Right ventricle myocardium inferior (tissue), 1 donor: ENCODE measurements at regions of chr14 and their contacts with region 1.

Region 1: GRCh38 chr14:20332788-20333493 is at the start of gene CCNB1IP1:
- DNase-seq: no peak
- ATAC-seq: peak; percentile 98
- total RNA-seq, gene CCNB1IP1: 41.0 TPM

Region 2: DNA sequence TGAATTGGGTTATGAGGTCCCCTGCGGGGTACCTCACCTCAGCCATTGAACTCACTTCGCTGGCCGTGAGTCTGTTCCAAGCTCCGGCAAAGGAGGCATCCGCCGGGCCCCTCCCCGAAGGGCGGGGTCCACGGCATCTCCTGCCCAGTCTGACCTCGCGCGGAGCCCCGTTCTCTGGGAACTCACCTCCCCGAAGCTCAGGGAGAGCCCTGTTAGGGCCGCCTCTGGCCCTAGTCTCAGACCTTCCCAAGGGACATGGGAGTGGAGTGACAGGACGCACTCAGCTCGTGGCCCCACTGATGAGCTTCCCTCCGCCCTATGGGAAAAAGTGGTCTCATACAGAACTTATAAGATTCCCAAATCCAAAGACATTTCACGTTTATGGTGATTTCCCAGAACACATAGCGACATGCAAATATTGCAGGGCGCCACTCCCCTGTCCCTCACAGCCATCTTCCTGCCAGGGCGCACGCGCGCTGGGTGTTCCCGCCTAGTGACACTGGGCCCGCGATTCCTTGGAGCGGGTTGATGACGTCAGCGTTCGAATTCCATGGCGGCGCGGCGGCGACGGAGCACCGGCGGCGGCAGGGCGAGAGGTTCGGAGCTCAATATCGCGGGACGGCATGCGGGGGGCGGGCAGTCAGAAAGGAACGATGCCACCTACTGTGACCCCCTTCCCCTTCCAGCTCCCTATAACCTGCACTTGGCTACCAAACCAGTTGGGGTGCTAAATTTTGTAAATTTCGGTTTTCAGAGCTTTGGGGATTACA is 10.3 kb after region 1 on chr14 and contains the start of gene PARP2:
- intact Hi-C with region 1: loop called (anchors 1 kb)
- DNase-seq: peak; percentile 98
- ATAC-seq: peak; percentile 98
- total RNA-seq, gene PARP2: 15.7 TPM

Region 3: GRCh38 chr14:20400589-20400964 is 67.6 kb after region 1 on chr14:
- intact Hi-C with region 1: loop called (anchors 2 kb)
- DNase-seq: no peak
- ATAC-seq: no peak

Region 4: DNA sequence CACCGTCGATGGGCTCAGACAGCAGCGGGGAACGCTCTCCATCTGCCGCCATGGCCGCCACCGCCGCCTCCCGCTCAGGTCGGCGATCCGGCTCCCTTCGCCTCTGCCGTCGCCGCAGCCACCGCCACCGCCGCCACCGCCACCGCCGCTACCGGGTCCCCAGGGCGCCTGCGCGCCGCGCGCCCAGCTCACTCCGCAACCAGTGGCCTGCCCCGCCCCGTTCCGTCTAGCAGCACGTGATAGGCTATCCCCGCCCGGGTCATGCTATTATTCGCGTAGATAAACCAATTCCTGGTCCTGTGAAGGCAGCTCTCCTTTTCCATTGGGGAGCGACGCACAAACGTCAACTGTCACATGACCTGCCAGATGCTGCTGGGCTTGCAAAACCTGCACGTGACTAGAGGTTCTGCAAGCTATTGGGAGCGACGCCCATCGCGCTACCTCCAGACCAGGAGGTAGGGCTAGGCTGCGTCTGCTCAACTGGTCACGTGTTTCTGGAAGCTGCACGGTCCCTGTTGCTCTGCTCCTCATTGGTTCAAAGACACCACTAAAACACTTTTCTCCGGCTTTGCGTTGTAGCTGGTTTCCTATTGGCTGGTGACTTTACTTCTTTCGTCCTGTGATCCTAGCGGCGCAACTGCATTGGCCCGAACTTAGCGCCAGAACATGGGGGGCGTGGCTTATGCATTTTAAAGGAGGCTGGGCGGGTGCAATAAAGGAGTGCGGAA is 128.5 kb after region 1 on chr14 and contains the start of gene PIP4P1:
- intact Hi-C with region 1: loop called (anchors 2 kb)
- DNase-seq: peak; percentile 100
- ATAC-seq: peak; percentile 98
- total RNA-seq, gene PIP4P1: 17.2 TPM